ENCODE measurements at regions of chr19 and their contacts with region 1.

Region 1: GRCh38 chr19:49929611-49930482 is 543 bp upstream of the NUP62 start:
- DNase-seq: peak; percentile 98
- ATAC-seq: peak; percentile 91
- H3K4me3 Mint-ChIP-seq: peak overlapping the region; percentile 95
- H3K27ac Mint-ChIP-seq: peak overlapping the region; percentile 92
- H3K4me1 Mint-ChIP-seq: peaks cover 55% of the 10 kb centered on the region
- H3K27me3 Mint-ChIP-seq: no peaks in the 10 kb centered on the region
- CTCF ChIP-seq: no peak

Region 2: GRCh38 chr19:49640113-49640898 is 289.5 kb before region 1 on chr19 and contains the start of gene RRAS:
- CTCF ChIA-PET with region 1: no interaction called
- POLR2A ChIA-PET with region 1: no interaction called
- intact Hi-C with region 1: no loop called
- DNase-seq: peak; percentile 100
- ATAC-seq: peak; percentile 75
- H3K4me3 Mint-ChIP-seq: peak within 1 kb of the TSS; percentile 92
- H3K27ac Mint-ChIP-seq: peak within 1 kb of the TSS; percentile 99
- H3K4me1 Mint-ChIP-seq: peaks cover 36% of the 10 kb centered on the region
- H3K27me3 Mint-ChIP-seq: no peaks in the 10 kb centered on the region
- CTCF ChIP-seq: no peak
- total RNA-seq, gene RRAS: 6.3 to 7.1 TPM

Region 3: DNA sequence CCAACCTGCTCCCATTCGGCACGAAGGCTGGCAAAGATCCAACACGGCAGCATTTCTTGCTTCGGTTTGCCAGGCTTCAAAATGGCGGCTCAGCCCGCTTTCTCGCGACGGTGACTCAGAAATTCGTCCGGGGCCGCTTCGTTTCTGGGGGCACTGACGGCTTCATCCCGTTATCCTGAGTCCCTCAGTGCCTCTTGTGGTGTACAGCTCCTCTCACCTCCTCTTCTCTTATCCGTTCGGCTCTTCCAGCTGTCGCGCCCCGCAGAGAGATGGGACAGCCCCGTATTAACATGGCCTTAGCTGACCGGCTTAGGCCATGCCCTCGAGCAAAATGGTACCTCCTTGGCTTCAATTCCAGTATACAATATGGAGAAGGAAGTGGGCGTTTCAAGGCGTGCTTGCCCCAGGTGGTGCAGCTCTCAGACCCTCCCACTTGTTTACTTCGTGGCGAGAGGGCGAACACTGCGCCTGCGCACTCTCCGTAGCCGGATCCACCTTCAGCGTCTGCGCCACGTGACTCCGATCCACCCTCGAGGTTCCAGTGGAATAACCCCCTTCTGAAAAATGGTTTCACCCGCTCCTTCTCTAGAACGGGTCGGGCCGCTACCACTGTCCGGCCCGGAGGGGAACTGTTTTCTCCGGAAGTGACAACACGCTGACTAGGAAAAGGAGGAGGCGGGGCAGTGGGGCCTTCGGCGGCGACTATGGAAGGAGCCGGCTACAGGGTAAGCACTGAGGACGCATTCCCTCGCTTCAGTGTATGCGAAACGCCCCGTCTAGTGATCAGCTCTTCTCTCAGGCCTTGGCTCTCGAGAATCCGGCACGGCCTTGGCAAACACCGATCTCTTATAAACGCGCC is 52.6 kb before region 1 on chr19 and contains the starts of genes AKT1S1 and TBC1D17:
- CTCF ChIA-PET with region 1: no interaction called
- POLR2A ChIA-PET with region 1: interaction called, 10 read pairs
- intact Hi-C with region 1: loop called (anchors 10 kb)
- DNase-seq: peak; percentile 99
- ATAC-seq: peak; percentile 70
- H3K4me3 Mint-ChIP-seq: no peak within 1 kb of the TSS
- H3K27ac Mint-ChIP-seq: no peak within 1 kb of the TSS
- H3K4me1 Mint-ChIP-seq: peaks cover 17% of the 10 kb centered on the region
- H3K27me3 Mint-ChIP-seq: no peaks in the 10 kb centered on the region
- CTCF ChIP-seq: no peak
- total RNA-seq, gene AKT1S1: 17.5 to 19.5 TPM
- total RNA-seq, gene TBC1D17: 26.6 to 26.8 TPM

Region 4: DNA sequence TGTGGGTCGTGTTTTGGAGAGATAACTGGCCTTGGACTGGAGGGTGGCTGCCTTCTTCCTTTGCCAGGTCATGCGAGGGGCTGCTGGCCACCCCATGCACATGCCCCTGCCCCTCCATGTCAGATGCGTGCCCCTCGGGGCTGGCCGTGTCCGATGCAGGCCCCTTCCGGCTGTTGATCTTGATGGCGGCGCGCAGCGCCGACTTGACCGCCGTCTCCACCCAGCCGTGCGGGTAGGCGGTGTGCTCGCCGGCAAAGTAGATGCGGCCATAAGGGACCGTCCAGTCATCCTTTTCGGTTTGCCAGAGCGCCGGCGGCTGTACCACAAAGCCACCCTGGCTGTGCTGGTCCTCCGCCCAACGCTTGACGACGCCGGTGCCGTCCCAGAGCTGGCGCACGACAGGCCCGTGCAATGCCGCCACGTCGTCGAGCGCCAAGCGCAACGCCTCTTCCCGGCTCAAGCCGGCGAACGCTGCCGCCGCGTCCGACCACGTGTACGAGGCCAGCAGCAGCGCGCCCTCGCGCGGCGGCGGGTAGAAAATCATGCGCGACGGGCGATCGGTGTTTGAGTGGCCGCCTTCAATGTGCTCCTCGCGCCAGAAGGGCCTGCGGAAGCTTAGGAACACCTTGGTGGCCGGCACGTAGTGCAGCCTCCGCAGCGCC is 40.0 kb before region 1 on chr19:
- CTCF ChIA-PET with region 1: no interaction called
- POLR2A ChIA-PET with region 1: interaction called, 48 read pairs
- intact Hi-C with region 1: loop called (anchors 5 kb)
- DNase-seq: peak; percentile 83
- ATAC-seq: peak; percentile 68
- H3K4me3 Mint-ChIP-seq: peak overlapping the region; percentile 68
- H3K27ac Mint-ChIP-seq: peak overlapping the region; percentile 76
- H3K4me1 Mint-ChIP-seq: peaks cover 31% of the 10 kb centered on the region
- H3K27me3 Mint-ChIP-seq: no peaks in the 10 kb centered on the region
- CTCF ChIP-seq: peak; percentile 87

Region 5: GRCh38 chr19:49896863-49897621 is 32.8 kb before region 1 on chr19 and contains the start of gene IL4I1:
- CTCF ChIA-PET with region 1: no interaction called
- POLR2A ChIA-PET with region 1: interaction called, 48 read pairs
- intact Hi-C with region 1: loop called (anchors 5 kb)
- DNase-seq: peak; percentile 89
- ATAC-seq: peak; percentile 68
- H3K4me3 Mint-ChIP-seq: peak within 1 kb of the TSS; percentile 75
- H3K27ac Mint-ChIP-seq: peak within 1 kb of the TSS; percentile 96
- H3K4me1 Mint-ChIP-seq: peaks cover 60% of the 10 kb centered on the region
- H3K27me3 Mint-ChIP-seq: no peaks in the 10 kb centered on the region
- CTCF ChIP-seq: no peak
- total RNA-seq, gene IL4I1: 16.1 to 16.2 TPM

Region 6: GRCh38 chr19:49916842-49917733 is 12.8 kb before region 1 on chr19:
- CTCF ChIA-PET with region 1: interaction called, 7 read pairs
- POLR2A ChIA-PET with region 1: interaction called, 167 read pairs
- intact Hi-C with region 1: no loop called
- DNase-seq: no peak
- ATAC-seq: no peak
- H3K4me3 Mint-ChIP-seq: no peak overlapping the region
- H3K27ac Mint-ChIP-seq: peak overlapping the region; percentile 35
- H3K4me1 Mint-ChIP-seq: peaks cover 55% of the 10 kb centered on the region
- H3K27me3 Mint-ChIP-seq: no peaks in the 10 kb centered on the region
- CTCF ChIP-seq: no peak

Region 7: DNA sequence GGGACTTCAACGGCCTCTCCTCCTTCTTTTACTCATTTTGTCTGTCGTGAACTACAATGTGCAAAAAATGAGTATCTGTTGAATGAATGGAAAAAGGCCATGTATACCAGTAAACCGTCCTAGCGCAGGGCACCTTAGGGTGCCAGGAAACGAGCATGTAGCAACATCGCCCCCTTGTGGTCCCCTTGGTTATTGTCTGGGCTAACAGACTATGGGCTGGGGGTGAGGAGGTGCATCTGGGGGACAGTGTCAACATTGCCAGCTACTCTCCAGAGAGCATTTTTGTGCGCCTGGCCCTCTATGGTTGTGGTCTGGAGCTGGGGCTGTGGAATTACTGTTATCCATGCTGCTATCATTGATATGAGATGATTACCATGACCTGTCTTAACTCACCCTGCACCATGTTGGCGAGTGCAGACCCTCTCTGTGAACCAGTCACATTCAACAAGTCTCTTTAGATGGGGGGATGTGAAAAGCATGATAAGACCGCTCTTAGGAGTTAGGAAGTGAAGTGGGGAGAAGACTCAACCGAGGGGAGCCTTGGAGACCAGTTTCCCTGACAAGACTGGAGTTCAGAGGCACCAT is 53.9 kb after region 1 on chr19:
- CTCF ChIA-PET with region 1: interaction called, 4 read pairs
- POLR2A ChIA-PET with region 1: interaction called, 4 read pairs
- intact Hi-C with region 1: loop called (anchors 2 kb)
- DNase-seq: peak; percentile 90
- ATAC-seq: peak; percentile 78
- H3K4me3 Mint-ChIP-seq: no peak overlapping the region
- H3K27ac Mint-ChIP-seq: no peak overlapping the region
- H3K4me1 Mint-ChIP-seq: peaks cover 10% of the 10 kb centered on the region
- H3K27me3 Mint-ChIP-seq: no peaks in the 10 kb centered on the region
- CTCF ChIP-seq: peak; percentile 92

Measured in activated CD8-positive, alpha-beta T cell treated with anti-CD3 and anti-CD28 coated beads for 36 hours (primary cell).